PC-9 (cell line): ENCODE measurements at regions of chr1 and their contacts with region 1.

Region 1: GRCh38 chr1:76154206-76154956 is 79.8 kb downstream of the ST6GALNAC3 start:
- DNase-seq: peak; percentile 49 to 51
- H3K4me3 ChIP-seq: peak overlapping the region; percentile 37; the same call in 1 of the 2 replicates
- H3K27ac ChIP-seq: no peak overlapping the region
- H3K4me1 ChIP-seq: no peaks in the 10 kb centered on the region
- H3K27me3 ChIP-seq: peaks cover 10% of the 10 kb centered on the region; the same call in 1 of the 2 replicates
- CTCF ChIP-seq: peak; percentile 94

Region 2: GRCh38 chr1:75991497-75992114 is 162.8 kb before region 1 on chr1:
- CTCF ChIA-PET with region 1: no interaction called
- POLR2A ChIA-PET with region 1: no interaction called
- intact Hi-C with region 1: loop called (anchors 10 kb)
- DNase-seq: peak; percentile 68 to 69
- H3K4me3 ChIP-seq: no peak overlapping the region
- H3K27ac ChIP-seq: no peak overlapping the region
- H3K4me1 ChIP-seq: no peaks in the 10 kb centered on the region
- H3K27me3 ChIP-seq: peaks cover 6% of the 10 kb centered on the region; the same call in 1 of the 2 replicates
- CTCF ChIP-seq: peak; percentile 96

Region 3: GRCh38 chr1:77126307-77126706 is 971.9 kb after region 1 on chr1:
- CTCF ChIA-PET with region 1: no interaction called
- POLR2A ChIA-PET with region 1: no interaction called
- intact Hi-C with region 1: loop called (anchors 1 kb)
- DNase-seq: peak; percentile 28 to 68
- H3K4me3 ChIP-seq: no peak overlapping the region
- H3K27ac ChIP-seq: no peak overlapping the region
- H3K4me1 ChIP-seq: no peaks in the 10 kb centered on the region
- H3K27me3 ChIP-seq: no peaks in the 10 kb centered on the region
- CTCF ChIP-seq: peak; percentile 89

Region 4: GRCh38 chr1:78114034-78114956 is 1959.9 kb after region 1 on chr1:
- CTCF ChIA-PET with region 1: no interaction called
- POLR2A ChIA-PET with region 1: no interaction called
- intact Hi-C with region 1: loop called (anchors 10 kb)
- DNase-seq: peak; percentile 64 to 72
- H3K4me3 ChIP-seq: no peak overlapping the region
- H3K27ac ChIP-seq: no peak overlapping the region
- H3K4me1 ChIP-seq: no peaks in the 10 kb centered on the region
- H3K27me3 ChIP-seq: no peaks in the 10 kb centered on the region
- CTCF ChIP-seq: peak; percentile 92